HEK293 (cell line): ENCODE measurements at regions of chr10 and their contacts with region 1.

Region 1: GRCh38 chr10:70758757-70759514 is 26.2 kb downstream of the TBATA start:
- H3K4me3 ChIP-seq: no peak overlapping the region
- H3K27ac ChIP-seq: no peak overlapping the region
- H3K4me1 ChIP-seq: no peaks in the 10 kb centered on the region
- CTCF ChIP-seq: peak; percentile 63; the same call in 1 of the 2 replicates

Region 2: DNA sequence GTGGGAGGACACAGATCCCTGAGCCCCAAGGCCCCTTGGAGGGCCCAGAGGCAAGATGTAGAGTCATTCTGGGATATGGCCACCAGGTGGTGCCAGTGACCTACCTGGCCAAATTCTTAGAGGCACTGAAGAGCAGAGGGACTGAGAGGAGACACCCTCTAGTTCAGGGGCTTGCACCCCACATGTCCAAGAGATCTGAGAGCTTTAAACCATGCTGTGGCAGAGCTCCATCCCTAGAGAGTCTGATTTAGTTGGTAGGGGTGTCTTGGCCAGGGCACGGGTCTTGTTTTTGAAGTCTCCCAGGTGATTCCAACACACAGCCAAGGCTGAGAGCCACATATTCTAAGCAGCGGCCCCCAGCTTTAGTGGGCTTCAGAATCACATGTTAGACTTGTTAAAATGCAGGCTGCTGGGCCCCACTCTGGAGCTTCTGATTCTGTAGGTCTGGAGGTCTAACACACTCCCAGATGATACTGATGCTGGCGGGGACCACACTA is 208.9 kb before region 1 on chr10:
- CTCF ChIA-PET with region 1: interaction called, 12 read pairs
- POLR2A ChIA-PET with region 1: interaction called, 7 read pairs
- H3K4me3 ChIP-seq: no peak overlapping the region
- H3K27ac ChIP-seq: no peak overlapping the region
- H3K4me1 ChIP-seq: 0 out of 2 replicates have a peak, but pooled peaks cover 2% of the 10 kb centered on the region
- CTCF ChIP-seq: peak; percentile 82

Region 3: GRCh38 chr10:70603449-70603801 is 155.5 kb before region 1 on chr10:
- CTCF ChIA-PET with region 1: no interaction called
- POLR2A ChIA-PET with region 1: no interaction called
- H3K4me3 ChIP-seq: no peak overlapping the region
- H3K27ac ChIP-seq: no peak overlapping the region
- H3K4me1 ChIP-seq: no peaks in the 10 kb centered on the region
- CTCF ChIP-seq: no peak